HEK293 (cell line): ENCODE measurements at regions of chr12 and their contacts with region 1.

Region 1: DNA sequence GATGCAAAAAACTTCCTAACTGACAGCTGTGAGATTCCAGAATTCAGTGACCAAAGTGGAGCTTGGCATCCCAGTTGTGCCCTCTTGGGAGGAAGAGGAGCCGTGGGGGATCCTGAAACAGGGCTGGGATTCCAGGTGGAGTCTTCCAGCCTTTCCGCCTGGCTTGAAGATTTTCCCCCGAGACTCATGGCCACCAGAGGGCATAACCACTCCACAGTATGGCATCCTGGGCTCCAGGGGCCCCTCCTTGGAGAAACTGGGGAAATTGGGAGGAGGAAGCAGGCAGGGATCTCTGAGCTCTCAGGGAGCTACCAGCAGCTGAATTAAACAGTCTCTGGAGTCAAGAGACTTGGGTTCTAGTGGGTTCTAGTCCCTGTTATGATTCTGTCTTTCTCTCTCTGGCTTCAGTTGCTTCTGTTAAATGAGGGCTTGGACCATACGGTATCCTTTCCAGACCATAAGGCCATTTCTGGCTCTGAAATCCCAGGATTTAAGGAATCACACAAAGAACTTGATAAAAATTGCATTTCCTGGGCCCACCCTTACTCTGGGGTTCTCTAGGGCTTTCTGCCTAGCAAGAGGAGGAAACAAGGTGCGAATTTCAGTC is 2.6 kb upstream of the TAMALIN start:
- H3K4me3 ChIP-seq: no peak overlapping the region
- H3K27ac ChIP-seq: no peak overlapping the region
- H3K4me1 ChIP-seq: peaks cover 2% of the 10 kb centered on the region; the same call in 1 of the 2 replicates
- CTCF ChIP-seq: peak; percentile 85

Region 2: DNA sequence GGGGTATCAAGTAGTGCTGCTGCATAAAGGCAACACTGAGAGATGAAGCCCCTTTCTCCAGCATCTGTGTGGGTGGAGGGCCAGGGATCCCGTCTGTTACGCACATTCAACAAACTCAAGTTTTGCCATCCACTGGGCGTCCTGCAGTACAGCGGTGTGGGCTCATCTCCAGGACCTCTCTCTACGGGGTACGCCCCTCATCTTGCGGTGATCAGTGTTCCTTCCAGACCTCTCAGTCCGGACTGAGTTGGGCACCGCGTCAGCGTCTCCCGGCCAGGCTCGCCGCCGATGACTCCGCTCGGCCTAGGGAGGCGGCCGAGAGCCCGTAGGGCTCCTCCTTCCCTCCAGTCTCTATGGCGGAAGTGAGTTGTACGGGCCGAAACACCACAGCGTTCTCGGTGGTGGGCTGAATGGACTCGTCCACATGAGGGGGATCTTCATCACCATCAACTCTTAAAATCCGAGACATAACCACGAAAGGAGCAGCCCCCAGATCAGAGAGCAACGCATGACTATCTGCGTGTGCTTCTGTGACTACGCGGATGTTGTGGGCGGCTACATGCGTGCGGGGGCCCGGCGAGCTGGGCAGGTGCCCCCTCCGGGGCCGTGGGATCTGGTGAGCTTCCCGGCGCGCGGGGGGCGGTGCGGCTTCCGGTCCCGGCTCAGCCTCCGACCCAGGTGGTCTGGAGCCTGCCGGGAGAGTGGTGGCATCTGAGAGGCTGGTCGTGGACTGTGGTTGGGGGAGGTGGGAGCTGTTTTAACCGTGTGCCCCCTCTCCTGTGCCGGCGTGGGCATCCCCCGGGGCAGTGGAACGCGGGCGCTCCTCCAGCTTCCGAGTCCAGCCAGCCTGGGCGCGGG is 65.4 kb after region 1 on chr12 and contains the start of gene ATG101:
- CTCF ChIA-PET with region 1: interaction called, 11 read pairs
- POLR2A ChIA-PET with region 1: interaction called, 4 read pairs
- H3K4me3 ChIP-seq: peak within 1 kb of the TSS; percentile 87
- H3K27ac ChIP-seq: peak within 1 kb of the TSS; percentile 92
- H3K4me1 ChIP-seq: 0 out of 2 replicates have a peak, but pooled peaks cover 7% of the 10 kb centered on the region
- CTCF ChIP-seq: peak; percentile 98

Region 3: GRCh38 chr12:52082988-52083637 is 79.0 kb after region 1 on chr12:
- CTCF ChIA-PET with region 1: interaction called, 11 read pairs
- POLR2A ChIA-PET with region 1: no interaction called
- H3K4me3 ChIP-seq: no peak overlapping the region
- H3K27ac ChIP-seq: no peak overlapping the region
- H3K4me1 ChIP-seq: no peaks in the 10 kb centered on the region
- CTCF ChIP-seq: peak; percentile 85

Region 4: DNA sequence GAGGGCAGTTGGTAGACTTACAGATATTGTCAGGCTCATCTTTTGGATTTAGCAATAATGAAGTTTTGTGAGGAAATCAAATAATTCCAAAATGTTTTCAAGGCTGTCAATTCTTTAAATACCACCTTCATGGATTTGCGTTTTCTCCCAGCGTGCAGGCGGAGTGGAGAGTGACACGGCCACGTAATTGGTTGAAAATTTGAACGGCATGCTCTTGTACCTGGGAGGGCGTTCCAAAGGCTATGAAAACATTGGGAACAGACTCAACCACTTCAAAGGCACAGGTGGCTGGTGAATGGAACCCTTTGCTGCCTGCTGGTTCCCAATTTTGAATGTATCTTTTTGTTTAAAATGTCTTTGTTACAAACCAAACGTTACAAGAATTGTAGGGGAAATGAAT is 87.7 kb after region 1 on chr12:
- CTCF ChIA-PET with region 1: interaction called, 10 read pairs
- POLR2A ChIA-PET with region 1: no interaction called
- H3K4me3 ChIP-seq: no peak overlapping the region
- H3K27ac ChIP-seq: no peak overlapping the region
- H3K4me1 ChIP-seq: no peaks in the 10 kb centered on the region
- CTCF ChIP-seq: no peak

Region 5: DNA sequence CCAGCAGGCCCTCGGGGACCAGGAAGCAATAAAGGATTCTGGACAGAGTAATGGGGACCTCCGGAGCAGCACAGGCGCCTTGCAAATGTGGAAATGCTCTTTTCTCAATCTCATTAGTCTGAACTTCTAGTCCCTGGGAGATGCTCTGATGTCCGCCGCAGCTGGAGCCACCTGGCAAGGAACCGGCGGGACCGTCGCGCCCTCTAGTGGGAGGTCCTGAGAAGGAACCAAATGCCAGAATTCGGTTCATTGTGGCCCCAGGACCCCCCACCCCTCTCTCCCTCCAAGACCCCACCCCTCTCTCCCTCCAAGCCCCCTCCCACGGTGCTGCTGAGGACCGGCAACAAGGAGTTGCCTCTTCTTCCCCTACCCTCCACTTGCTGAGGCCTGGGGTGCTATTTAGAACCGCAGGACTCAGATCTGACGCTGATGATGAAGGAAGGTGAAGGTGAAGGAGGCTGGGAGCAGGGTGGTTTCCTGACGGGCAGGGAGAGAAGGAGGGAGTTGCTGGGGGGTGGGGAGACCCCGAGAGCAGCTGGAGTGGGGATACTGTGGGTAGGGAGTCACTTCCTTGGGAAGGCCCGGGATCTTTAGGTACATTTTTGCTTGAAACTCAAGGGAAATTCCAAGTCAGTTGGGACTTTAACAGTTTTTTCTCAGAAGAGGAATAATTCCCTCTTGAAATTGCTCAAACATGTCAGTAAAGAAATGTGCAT is 117.8 kb after region 1 on chr12:
- CTCF ChIA-PET with region 1: interaction called, 14 read pairs
- POLR2A ChIA-PET with region 1: no interaction called
- H3K4me3 ChIP-seq: no peak overlapping the region
- H3K27ac ChIP-seq: no peak overlapping the region
- H3K4me1 ChIP-seq: peaks cover 6% of the 10 kb centered on the region; the same call in 1 of the 2 replicates
- CTCF ChIP-seq: peak; percentile 33; the same call in 1 of the 2 replicates